PC-9 (cell line): ENCODE measurements at regions of chr17 and their contacts with region 1.

Region 1: GRCh38 chr17:78140169-78140976 is 5.8 kb upstream of the C17orf99 start:
- DNase-seq: peak; percentile 84 to 99
- H3K4me3 ChIP-seq: peak overlapping the region; percentile 51; the same call in 1 of the 2 replicates
- H3K27ac ChIP-seq: peak overlapping the region; percentile 34; the same call in 1 of the 2 replicates
- H3K4me1 ChIP-seq: peaks cover 43% of the 10 kb centered on the region
- H3K27me3 ChIP-seq: no peaks in the 10 kb centered on the region
- CTCF ChIP-seq: no peak

Region 2: GRCh38 chr17:77935121-77935571 is 205.2 kb before region 1 on chr17:
- CTCF ChIA-PET with region 1: no interaction called
- POLR2A ChIA-PET with region 1: no interaction called
- intact Hi-C with region 1: no loop called
- DNase-seq: no peak
- H3K4me3 ChIP-seq: no peak overlapping the region
- H3K27ac ChIP-seq: no peak overlapping the region
- H3K4me1 ChIP-seq: no peaks in the 10 kb centered on the region
- H3K27me3 ChIP-seq: peaks cover 60% of the 10 kb centered on the region
- CTCF ChIP-seq: no peak

Region 3: GRCh38 chr17:78128551-78129350 is 11.6 kb before region 1 on chr17 and contains the start of gene TMC6:
- CTCF ChIA-PET with region 1: interaction called, 19 read pairs
- POLR2A ChIA-PET with region 1: interaction called, 21 read pairs
- intact Hi-C with region 1: no loop called
- DNase-seq: peak; percentile 83 to 92
- H3K4me3 ChIP-seq: peak within 1 kb of the TSS; percentile 81
- H3K27ac ChIP-seq: peak within 1 kb of the TSS; percentile 69
- H3K4me1 ChIP-seq: peaks cover 19% of the 10 kb centered on the region
- H3K27me3 ChIP-seq: no peaks in the 10 kb centered on the region
- CTCF ChIP-seq: no peak
- total RNA-seq, gene TMC6: 97.7 and 116 TPM in 2 replicates

Region 4: GRCh38 chr17:78176548-78177025 is 36.2 kb after region 1 on chr17:
- CTCF ChIA-PET with region 1: interaction called, 6 read pairs
- POLR2A ChIA-PET with region 1: interaction called, 37 read pairs
- intact Hi-C with region 1: no loop called
- DNase-seq: no peak
- H3K4me3 ChIP-seq: no peak overlapping the region
- H3K27ac ChIP-seq: no peak overlapping the region
- H3K4me1 ChIP-seq: 0 out of 2 replicates have a peak, but pooled peaks cover 4% of the 10 kb centered on the region
- H3K27me3 ChIP-seq: no peaks in the 10 kb centered on the region
- CTCF ChIP-seq: peak; percentile 50

Region 5: DNA sequence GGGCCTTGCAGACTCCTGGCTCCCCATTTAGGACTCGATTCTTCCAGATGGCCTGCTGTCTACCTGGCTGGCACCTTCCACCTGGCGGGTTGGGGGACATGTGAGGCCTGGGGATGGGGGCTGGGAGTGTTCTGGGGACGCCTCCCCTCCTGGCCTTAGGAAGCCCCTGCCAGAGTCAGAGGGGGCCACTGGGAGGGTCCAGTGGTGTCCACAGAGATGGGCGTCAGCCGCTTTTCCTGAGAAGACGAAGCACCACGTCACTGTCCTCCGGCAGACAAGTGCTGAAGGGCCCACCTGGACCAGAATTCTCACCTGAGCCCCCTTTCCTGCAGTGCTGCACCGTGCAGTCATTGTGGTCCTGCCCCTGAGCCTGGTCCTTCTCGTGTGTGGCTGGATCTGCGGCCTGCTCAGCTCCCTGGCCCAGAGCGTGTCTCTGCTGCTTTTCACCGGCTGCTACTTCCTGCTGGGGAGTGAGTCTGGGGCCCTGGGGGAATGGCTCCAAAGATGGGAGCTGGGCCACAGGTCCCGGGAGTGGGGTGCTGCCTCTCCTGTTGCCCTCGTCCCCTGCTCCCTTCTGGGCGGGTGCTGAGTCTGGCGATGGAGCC is 94.0 kb after region 1 on chr17:
- CTCF ChIA-PET with region 1: interaction called, 18 read pairs
- POLR2A ChIA-PET with region 1: no interaction called
- intact Hi-C with region 1: no loop called
- DNase-seq: no peak
- H3K4me3 ChIP-seq: no peak overlapping the region
- H3K27ac ChIP-seq: no peak overlapping the region
- H3K4me1 ChIP-seq: no peaks in the 10 kb centered on the region
- H3K27me3 ChIP-seq: no peaks in the 10 kb centered on the region
- CTCF ChIP-seq: no peak

Region 6: DNA sequence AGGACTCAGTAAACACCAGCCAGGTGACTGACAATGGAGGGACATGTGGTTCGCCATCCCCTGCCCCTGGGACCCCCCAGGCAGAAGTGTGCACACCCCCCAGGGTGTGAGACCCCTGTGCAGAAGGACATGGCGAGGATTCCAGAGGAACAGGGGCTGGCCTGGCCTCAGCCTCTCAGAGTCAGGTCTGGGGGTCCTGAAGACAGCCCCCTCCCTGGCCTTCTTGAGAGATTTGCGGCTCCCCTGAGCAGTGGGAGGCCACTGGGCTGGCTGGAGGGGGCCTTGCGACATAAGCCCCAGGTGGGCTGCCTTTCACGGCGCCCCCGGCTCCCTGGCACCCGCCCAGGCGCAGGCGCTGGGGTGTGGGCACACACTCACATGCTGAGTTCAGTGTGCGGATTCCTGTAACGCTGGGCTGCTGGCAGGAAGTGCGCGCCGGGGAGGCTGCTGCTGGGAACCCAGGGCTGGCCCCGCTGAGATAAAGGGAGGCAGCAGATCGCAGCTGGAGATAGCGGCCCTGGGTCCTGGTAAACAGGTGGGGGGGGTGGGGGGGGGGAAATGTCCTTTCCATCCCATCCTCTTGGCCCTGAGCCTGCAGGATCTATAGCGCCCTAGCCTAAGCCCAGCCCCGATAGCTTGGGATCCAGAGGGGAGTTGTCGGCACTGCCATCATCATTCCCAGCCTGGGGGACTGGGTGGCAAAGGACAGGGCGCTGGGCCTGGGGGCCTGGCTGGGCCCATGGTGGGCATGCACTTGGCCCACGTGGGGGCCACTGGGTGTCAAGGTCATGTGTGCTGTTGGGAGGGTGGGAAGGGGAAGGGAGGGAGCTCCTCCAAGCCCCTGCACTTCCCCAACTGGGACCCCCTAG is 118.2 kb after region 1 on chr17:
- CTCF ChIA-PET with region 1: no interaction called
- POLR2A ChIA-PET with region 1: no interaction called
- intact Hi-C with region 1: no loop called
- DNase-seq: no peak
- H3K4me3 ChIP-seq: no peak overlapping the region
- H3K27ac ChIP-seq: no peak overlapping the region
- H3K4me1 ChIP-seq: peaks cover 6% of the 10 kb centered on the region; the same call in 1 of the 2 replicates
- H3K27me3 ChIP-seq: no peaks in the 10 kb centered on the region
- CTCF ChIP-seq: no peak

Region 7: GRCh38 chr17:79721993-79722671 is 1581.8 kb after region 1 on chr17:
- CTCF ChIA-PET with region 1: interaction called, 19 read pairs
- POLR2A ChIA-PET with region 1: no interaction called
- intact Hi-C with region 1: no loop called
- DNase-seq: no peak
- H3K4me3 ChIP-seq: no peak overlapping the region
- H3K27ac ChIP-seq: no peak overlapping the region
- H3K4me1 ChIP-seq: no peaks in the 10 kb centered on the region
- H3K27me3 ChIP-seq: no peaks in the 10 kb centered on the region
- CTCF ChIP-seq: peak; percentile 53